Activated naive CD4-positive, alpha-beta T cell treated with anti-CD3 and anti-CD28 coated beads for 36 hours (primary cell): ENCODE measurements at regions of chr3 and their contacts with region 1.

Region 1: DNA sequence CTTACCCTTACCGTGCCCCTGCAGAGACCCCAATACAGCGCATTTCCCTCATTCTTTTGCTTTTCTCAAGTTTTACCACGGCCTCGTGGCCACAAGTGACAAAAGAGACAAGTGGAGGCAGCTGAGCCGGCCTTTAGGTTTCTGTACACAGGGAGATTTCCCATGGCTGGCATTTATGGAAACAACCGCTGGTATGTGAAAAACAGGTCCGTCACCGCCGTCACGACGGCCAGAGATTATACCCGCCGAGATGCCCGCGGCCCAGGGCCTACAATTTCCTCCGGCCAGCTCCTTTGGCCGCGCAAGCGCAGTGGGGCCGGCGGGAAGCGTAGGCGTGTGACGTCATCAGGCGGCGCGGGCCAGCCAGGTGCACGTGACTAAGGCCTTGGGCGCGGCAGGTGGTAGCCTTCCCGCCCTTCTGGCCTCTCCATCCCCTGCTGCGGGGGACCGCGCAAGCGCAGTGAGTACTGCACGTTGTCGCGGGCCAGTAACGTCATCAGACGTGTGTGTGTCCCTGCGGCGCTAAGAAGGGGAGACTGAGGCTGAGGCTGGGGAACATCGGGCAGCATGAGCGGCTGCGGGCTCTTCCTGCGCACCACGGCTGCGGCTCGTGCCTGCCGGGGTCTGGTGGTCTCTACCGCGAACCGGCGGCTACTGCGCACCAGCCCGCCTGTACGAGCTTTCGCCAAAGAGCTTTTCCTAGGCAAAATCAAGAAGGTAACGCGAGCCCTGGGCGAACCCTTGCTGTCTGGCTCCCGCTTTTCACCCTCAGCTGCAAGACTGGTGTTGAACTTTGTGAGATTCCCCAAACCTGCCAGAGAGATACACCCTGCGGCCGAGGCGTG is at the start of gene ACAD9:
- DNase-seq: peak; percentile 96
- H3K4me3 Mint-ChIP-seq: peak within 1 kb of the TSS; percentile 84
- H3K27ac Mint-ChIP-seq: peak within 1 kb of the TSS; percentile 90
- H3K4me1 Mint-ChIP-seq: peaks cover 67% of the 10 kb centered on the region
- H3K27me3 Mint-ChIP-seq: no peaks in the 10 kb centered on the region
- total RNA-seq, gene ACAD9: 37.0 to 40.6 TPM

Region 2: DNA sequence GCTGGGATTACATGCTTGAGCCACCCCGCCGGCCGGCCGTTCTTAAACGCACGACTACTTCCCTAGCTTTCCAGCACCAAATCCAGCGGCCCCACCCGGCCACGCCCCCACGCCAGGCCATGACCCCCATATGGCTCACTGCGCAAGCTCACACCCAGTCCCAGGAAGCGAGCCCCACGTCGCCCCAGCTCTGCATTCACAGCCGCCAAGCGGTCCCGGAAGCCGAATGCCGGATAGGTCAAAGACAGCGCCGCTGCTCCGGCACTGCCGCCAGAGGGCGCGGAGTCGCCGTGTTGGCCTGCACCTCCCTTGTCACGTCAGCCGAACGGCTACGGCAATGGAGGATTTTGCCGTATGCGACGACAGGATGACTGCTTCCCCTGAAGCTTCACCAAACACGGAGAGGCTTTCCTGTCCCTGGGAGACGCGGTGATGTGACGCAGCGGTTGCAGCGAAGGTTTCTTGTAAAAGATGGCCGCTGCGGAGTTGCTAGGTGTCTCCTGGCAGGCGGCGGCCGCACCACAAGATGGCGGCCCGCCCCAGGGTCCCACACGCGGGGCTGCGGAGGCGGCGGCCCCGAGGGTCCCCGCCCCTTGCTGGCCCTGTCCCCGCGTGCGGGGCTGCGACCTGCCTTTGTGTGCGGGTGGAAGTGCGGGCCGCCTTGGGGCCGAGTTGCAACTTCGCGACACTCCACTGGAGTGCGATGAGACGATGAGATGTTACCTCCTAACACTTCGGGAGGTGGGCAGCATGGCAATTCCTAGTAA is 198.6 kb before region 1 on chr3:
- CTCF ChIA-PET with region 1: interaction called, 18 read pairs
- intact Hi-C with region 1: loop called (anchors 1 kb)
- DNase-seq: peak; percentile 98
- H3K4me3 Mint-ChIP-seq: peak overlapping the region; percentile 86
- H3K27ac Mint-ChIP-seq: peak overlapping the region; percentile 99
- H3K4me1 Mint-ChIP-seq: peaks cover 23% of the 10 kb centered on the region
- H3K27me3 Mint-ChIP-seq: no peaks in the 10 kb centered on the region

Region 3: DNA sequence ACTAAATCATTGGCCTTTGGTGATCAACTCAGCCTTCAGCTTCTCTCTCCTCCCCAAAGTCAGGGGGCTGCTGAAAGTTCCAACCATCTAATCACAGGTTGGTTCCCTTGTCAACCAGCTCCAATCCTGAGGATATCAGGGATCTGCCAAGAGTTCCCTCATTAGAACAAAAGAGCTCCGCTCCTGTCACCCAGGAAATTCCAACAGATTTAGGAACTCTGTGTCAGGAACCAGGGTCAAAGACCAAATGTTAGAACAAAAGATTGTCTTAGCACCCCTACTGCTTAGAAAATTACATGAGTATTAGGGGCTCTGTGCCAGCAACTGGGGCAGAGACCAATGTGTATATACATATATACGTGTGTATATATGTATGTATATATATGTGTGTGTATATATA is 185.7 kb before region 1 on chr3:
- CTCF ChIA-PET with region 1: no interaction called
- intact Hi-C with region 1: no loop called
- DNase-seq: no peak
- H3K4me3 Mint-ChIP-seq: no peak overlapping the region
- H3K27ac Mint-ChIP-seq: no peak overlapping the region
- H3K4me1 Mint-ChIP-seq: peaks cover 2% of the 10 kb centered on the region
- H3K27me3 Mint-ChIP-seq: no peaks in the 10 kb centered on the region

Region 4: DNA sequence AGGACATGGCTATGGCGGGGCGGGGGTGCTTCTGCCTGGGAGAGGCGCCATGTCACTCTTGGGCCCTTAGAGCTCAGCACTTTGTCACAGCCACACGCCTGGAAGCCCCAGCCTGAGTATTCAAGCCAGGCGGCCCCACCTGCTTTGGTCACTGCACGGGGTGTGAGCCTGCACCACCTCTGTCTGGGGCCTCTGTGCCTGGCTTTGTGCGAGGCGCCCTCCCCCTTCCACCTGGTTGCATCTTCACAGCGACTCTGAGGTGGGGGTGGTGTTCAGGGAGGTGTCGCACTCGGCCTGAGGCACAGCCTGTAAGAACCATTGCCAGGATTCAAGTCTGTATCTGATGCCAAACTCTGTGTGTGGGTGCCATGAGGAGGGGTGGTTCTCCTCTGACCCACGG is 24.2 kb after region 1 on chr3:
- CTCF ChIA-PET with region 1: no interaction called
- intact Hi-C with region 1: no loop called
- DNase-seq: no peak
- H3K4me3 Mint-ChIP-seq: no peak overlapping the region
- H3K27ac Mint-ChIP-seq: no peak overlapping the region
- H3K4me1 Mint-ChIP-seq: no peaks in the 10 kb centered on the region
- H3K27me3 Mint-ChIP-seq: no peaks in the 10 kb centered on the region

Region 5: DNA sequence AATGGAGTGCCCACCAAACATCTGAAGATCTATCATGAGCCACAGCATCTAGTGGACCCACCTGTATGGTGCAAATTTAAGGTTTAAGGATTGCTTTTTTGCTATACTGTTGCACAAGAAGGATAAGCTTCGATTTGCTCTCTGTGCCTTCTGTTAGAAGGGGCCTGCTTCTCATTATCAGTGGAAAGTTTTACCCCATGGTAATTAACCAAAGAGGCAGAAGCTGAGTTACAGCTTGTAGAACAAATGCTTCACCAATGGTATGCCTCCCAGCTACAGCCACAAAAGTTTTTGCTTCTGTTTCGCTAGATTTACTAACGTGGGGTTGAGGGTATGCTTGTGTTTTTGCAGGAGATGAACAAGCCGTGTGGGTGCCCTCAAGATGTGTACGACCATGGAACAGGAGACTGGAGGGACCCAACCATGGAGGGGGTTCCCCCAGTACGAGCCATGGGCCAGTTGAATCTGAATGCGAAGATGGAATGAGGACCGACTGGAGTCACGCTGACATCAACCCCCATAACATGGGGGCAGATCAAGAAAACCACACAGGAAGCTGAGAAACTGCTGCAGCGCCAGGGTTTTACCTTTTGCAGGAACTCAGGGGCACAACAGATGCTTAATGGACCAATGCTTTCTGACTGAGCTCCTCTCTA is 43.6 kb after region 1 on chr3:
- CTCF ChIA-PET with region 1: interaction called, 10 read pairs
- intact Hi-C with region 1: loop called (anchors 1 kb)
- DNase-seq: peak; percentile 80
- H3K4me3 Mint-ChIP-seq: peak overlapping the region; percentile 73
- H3K27ac Mint-ChIP-seq: peak overlapping the region; percentile 80
- H3K4me1 Mint-ChIP-seq: peaks cover 48% of the 10 kb centered on the region
- H3K27me3 Mint-ChIP-seq: no peaks in the 10 kb centered on the region

Region 6: DNA sequence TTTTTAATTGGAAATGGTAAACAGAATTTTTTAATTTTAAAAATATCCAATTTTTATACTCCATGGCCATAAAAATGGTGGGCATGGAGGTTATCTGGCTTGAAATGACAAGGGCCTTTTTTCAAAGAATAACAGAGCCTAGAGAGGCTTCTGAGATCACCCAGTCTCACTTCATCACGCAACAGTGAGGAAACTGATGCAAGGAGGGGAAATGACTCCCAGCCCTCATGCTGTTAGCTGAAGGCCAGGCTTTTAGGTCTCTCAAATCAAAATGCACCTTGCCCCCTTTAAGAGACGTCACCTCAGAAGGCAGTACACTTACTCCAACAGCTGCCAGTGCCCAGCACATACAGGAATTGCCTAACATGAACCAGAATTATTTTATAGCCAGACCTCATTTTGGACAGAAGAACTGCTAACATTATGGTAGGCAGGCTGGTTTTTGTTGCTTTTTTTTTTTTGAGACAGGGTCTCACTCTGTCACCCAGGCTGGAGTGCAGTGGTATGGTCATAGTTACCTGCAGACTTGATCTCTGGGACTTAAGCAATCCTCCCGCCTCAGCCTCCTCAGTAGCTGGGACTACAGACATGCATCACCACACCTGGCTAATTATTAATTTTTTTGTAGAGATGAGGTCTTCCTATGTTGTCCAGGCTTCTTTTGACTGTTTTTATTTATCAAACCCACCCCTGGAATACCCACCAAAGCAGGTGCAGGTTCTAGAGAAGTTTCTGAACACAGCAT is 233.1 kb after region 1 on chr3:
- CTCF ChIA-PET with region 1: no interaction called
- intact Hi-C with region 1: loop called (anchors 5 kb)
- DNase-seq: peak; percentile 93
- H3K4me3 Mint-ChIP-seq: peak overlapping the region; percentile 68
- H3K27ac Mint-ChIP-seq: peak overlapping the region; percentile 96
- H3K4me1 Mint-ChIP-seq: peaks cover 84% of the 10 kb centered on the region
- H3K27me3 Mint-ChIP-seq: no peaks in the 10 kb centered on the region

Region 7: DNA sequence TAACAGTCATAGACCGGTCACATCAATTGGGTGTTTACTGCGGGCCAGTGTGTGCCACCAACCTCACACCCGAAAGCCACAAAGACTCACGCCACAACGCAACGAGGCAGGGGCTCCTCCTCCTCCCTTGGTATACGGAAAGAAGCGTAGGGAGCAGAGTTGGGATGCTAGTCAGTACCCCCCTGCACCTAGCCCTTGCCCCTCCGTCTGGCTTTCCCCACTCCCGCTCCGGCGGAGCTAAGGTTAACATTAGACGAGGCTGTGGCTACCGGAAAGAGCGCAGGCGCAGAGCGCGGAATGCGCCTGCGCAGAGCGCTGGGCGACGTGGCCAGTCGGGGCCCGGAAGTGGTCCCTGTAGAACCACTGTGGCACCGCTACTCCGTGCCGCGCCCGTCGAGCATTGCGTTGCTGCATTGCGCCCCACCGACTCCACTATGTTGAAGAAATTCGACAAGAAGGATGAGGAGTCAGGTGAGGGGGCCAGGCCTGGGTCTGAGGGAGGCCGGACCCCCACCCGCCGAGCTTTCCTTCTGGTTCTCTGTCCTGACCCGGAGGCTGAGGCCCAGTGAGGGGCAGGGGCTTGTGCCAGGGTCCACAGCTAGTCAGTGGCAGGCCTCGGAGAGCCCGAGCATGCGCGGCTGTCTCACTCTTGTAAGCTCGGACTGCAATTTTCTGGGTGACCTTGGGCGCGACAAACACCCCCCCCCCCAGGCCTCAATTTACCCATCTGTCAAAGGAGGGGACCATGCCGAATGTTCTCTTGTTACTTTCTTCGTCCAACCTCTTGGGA is 370.1 kb after region 1 on chr3 and contains the start of gene COPG1:
- CTCF ChIA-PET with region 1: interaction called, 3 read pairs
- intact Hi-C with region 1: loop called (anchors 2 kb)
- DNase-seq: peak; percentile 86
- H3K4me3 Mint-ChIP-seq: peak within 1 kb of the TSS; percentile 95
- H3K27ac Mint-ChIP-seq: peak within 1 kb of the TSS; percentile 89
- H3K4me1 Mint-ChIP-seq: peaks cover 33% of the 10 kb centered on the region
- H3K27me3 Mint-ChIP-seq: no peaks in the 10 kb centered on the region
- total RNA-seq, gene COPG1: 125 to 128 TPM